PC-3 (cell line): ENCODE measurements at regions of chr17 and their contacts with region 1.

Region 1: DNA sequence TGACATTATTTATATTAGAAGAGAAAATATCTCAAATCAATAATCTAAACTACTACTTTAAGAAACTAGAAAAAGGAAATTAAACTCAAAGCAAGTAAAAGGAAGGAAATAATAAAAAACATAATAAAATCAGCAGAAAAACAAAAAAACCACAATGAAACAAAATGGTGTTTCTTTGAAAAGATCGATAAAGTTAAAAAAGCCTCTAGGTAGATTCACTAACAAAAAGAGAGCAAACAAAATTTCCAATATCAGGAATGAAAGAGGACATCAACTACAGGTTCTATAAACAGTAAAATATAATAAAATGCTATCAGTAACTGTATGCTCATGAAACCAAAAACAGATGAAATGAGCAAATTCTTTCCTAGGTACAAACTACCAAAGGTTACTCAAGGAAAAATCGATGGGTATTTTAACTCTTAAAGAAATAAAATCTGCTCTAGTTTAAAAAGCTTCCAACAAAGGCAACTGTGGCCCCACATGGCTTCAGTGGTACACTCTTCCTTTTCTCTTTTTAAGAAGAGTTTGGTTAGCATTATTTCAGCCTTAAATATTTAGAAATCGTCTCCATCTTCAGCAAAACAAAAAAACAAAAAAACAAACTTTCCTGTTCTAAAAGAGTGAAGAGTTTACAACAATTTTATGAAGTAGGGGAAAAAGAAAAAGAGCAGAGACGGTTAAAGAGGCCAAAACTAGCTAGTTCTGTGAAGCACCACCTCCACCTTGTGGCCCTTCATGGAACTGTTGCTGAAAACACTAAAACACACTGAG is 102.2 kb downstream of the TRIM37 start:
- DNase-seq: peak; percentile 82
- ATAC-seq: peak; percentile 70
- H3K4me3 ChIP-seq: no peak overlapping the region
- H3K27ac ChIP-seq: no peak overlapping the region
- H3K4me1 ChIP-seq: 0 out of 2 replicates have a peak, but pooled peaks cover 6% of the 10 kb centered on the region
- H3K27me3 ChIP-seq: no peaks in the 10 kb centered on the region
- CTCF ChIP-seq: peak; percentile 98

Region 2: DNA sequence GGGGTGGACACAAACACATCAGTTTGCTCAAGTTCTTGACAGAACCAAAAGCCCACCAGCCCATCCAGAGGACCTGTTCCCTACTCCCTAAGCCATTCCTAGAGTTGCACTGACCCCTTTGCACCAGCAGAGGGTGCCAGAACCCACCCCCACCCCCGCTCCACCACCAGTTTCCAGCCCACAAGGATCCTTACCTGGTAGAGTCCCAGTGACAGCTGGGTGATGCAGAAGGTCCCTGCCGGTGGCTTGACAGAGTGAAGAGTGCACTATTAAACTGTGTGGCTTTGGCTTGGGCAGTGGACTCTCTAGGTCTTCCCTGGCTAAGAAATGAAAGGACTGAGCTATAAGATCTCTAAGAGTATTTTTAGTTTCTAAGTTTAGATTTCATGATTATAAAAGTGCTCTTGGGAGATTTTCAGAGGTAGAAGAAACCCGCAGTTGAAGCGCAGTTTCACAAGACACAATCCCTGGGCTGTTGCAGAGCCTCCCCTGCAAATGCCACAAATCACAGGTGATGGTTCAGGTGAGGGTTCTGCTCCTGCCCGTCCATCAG is 416.7 kb before region 1 on chr17:
- CTCF ChIA-PET with region 1: interaction called, 5 read pairs
- POLR2A ChIA-PET with region 1: no interaction called
- intact Hi-C with region 1: loop called (anchors 1 kb)
- DNase-seq: peak; percentile 84
- ATAC-seq: peak; percentile 97
- H3K4me3 ChIP-seq: no peak overlapping the region
- H3K27ac ChIP-seq: no peak overlapping the region
- H3K4me1 ChIP-seq: no peaks in the 10 kb centered on the region
- H3K27me3 ChIP-seq: 0 out of 2 replicates have a peak, but pooled peaks cover 4% of the 10 kb centered on the region
- CTCF ChIP-seq: peak; percentile 98

Region 3: GRCh38 chr17:58710936-58711775 is 293.4 kb before region 1 on chr17:
- CTCF ChIA-PET with region 1: interaction called, 19 read pairs
- POLR2A ChIA-PET with region 1: no interaction called
- intact Hi-C with region 1: loop called (anchors 1 kb)
- DNase-seq: peak; percentile 85
- ATAC-seq: peak; percentile 58
- H3K4me3 ChIP-seq: no peak overlapping the region
- H3K27ac ChIP-seq: no peak overlapping the region
- H3K4me1 ChIP-seq: no peaks in the 10 kb centered on the region
- H3K27me3 ChIP-seq: no peaks in the 10 kb centered on the region
- CTCF ChIP-seq: peak; percentile 96

Region 4: DNA sequence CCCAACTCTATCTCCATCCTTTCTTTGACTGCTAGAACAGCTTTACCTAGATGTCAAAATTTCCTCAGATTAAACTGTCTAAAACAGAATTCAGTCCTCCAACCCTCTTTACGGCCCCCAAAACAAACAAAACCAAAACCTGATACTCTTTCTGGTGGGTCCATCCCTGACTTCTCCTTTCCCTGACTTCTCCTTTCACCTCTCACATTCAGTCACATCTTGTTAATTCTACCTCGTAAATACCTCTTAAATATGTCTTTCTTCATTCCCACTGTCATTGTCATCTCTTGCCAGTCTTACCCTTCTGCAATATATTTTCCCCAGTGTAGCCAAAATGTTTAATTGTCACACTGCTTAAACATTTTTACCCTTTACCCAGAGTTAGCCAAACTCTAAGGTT is 244.3 kb before region 1 on chr17:
- CTCF ChIA-PET with region 1: no interaction called
- POLR2A ChIA-PET with region 1: interaction called, 11 read pairs
- intact Hi-C with region 1: no loop called
- DNase-seq: no peak
- ATAC-seq: no peak
- H3K4me3 ChIP-seq: no peak overlapping the region
- H3K27ac ChIP-seq: no peak overlapping the region
- H3K4me1 ChIP-seq: peaks cover 11% of the 10 kb centered on the region; the same call in 1 of the 2 replicates
- H3K27me3 ChIP-seq: peaks cover 84% of the 10 kb centered on the region
- CTCF ChIP-seq: no peak

Region 5: DNA sequence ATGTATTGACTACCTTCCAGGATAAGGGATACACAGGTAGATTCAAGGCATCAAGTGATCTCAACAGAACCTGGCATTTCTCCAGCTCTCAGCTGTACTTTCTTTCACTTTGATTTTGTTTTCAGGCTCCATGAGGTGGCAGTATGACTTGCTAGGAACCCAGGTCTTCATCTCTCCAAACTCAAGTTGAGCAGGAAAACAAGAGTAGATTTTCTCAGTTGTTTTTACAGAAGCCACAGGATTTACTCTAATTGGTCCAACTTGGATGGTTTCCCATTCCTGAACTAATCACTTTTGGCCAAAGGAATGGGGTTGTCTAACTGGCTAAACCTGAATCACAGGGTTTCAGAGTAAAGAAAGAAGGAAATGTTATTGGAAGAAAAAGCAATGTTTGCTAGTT is 44.5 kb before region 1 on chr17:
- CTCF ChIA-PET with region 1: interaction called, 3 read pairs
- POLR2A ChIA-PET with region 1: no interaction called
- intact Hi-C with region 1: loop called (anchors 1 kb)
- DNase-seq: peak; percentile 87
- ATAC-seq: peak; percentile 65
- H3K4me3 ChIP-seq: no peak overlapping the region
- H3K27ac ChIP-seq: no peak overlapping the region
- H3K4me1 ChIP-seq: peaks cover 19% of the 10 kb centered on the region
- H3K27me3 ChIP-seq: no peaks in the 10 kb centered on the region
- CTCF ChIP-seq: peak; percentile 68

Region 6: DNA sequence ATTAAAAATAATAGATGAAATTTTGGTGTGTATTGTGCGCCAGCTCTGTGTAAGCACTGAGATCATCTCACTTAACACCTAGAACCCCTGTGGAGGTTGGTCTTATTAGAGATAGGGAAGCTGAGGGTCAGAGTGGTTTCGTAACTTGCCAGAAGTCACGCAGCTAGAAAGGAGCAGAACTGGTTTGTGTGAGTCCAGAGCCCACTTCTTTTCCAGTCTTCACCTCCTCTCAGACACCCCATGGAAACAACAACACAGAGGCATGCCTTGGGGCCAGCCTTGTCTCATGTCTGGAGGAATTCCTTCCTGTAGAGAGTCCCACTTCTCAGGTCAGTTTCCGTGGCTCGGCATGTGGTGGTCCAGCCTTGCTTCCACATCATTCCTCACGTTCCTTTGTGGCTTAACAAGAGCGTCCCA is 343.5 kb after region 1 on chr17:
- CTCF ChIA-PET with region 1: no interaction called
- POLR2A ChIA-PET with region 1: no interaction called
- intact Hi-C with region 1: no loop called
- DNase-seq: no peak
- ATAC-seq: no peak
- H3K4me3 ChIP-seq: no peak overlapping the region
- H3K27ac ChIP-seq: no peak overlapping the region
- H3K4me1 ChIP-seq: no peaks in the 10 kb centered on the region
- H3K27me3 ChIP-seq: no peaks in the 10 kb centered on the region
- CTCF ChIP-seq: no peak

Region 7: DNA sequence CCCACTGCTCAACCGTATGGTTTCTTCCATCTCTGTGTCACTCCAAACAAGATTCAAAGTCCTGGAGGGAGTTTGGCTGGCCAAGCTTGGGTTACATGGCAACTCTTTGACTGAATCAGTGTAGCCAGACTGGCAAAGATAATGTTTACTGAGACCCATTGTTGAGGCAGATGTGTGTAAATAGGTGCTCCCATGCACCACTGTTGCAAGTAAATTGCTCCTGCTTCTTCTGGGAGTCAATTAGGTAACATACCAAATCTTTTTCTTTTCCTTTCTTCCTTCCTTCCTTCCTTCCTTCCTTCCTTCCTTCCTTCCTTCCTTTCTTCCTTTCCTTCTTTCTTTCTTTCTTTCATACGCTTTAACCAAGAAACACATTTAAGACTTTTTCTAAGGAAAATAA is 474.6 kb after region 1 on chr17:
- CTCF ChIA-PET with region 1: no interaction called
- POLR2A ChIA-PET with region 1: no interaction called
- intact Hi-C with region 1: no loop called
- DNase-seq: no peak
- ATAC-seq: no peak
- H3K4me3 ChIP-seq: no peak overlapping the region
- H3K27ac ChIP-seq: no peak overlapping the region
- H3K4me1 ChIP-seq: no peaks in the 10 kb centered on the region
- H3K27me3 ChIP-seq: no peaks in the 10 kb centered on the region
- CTCF ChIP-seq: no peak